GM12878 (cell line): ENCODE measurements at regions of chr3 and their contacts with region 1.

Region 1: GRCh38 chr3:171822431-171823106 is 12.3 kb upstream of the PLD1 start:
- DNase-seq: no peak
- ATAC-seq: peak; percentile 88
- H3K4me3 ChIP-seq: no peak overlapping the region
- H3K27ac ChIP-seq: no peak overlapping the region
- H3K4me1 ChIP-seq: no peaks in the 10 kb centered on the region
- H3K27me3 ChIP-seq: no peaks in the 10 kb centered on the region; a peak in 1 of 4 replicates
- CTCF ChIP-seq: no peak
- EP300 ChIP-seq: no peak
- POLR2A ChIP-seq: no peak
- RAD21 ChIP-seq: no peak

Region 2: DNA sequence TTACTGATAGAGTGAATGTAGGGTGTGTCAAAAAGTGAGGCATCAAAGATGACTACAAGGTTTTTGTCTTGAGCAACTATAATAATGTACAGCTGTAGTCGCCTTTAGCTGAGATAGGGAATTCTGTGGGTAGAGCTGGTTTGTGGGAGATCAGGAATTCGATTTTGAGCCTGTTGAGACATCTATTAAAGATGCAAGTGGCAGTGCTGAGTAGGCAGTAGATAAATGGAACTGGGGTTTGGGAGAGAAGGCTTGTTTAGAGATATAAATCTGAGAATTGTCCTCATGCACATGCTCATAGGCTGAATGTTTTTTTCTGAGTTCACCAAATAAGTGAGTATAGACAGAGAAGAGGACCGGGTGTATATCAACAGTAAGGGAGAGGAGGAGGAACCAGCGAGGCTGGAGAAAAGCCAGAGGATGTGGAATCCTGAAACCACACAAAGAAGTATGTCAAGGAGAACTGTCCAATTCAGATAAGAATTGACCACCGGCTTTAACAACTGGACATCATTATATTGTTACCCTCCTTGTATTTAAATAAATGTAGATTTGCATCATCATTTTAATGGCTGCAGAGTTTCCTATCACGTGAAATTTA is 216.3 kb before region 1 on chr3:
- CTCF ChIA-PET with region 1: no interaction called
- POLR2A ChIA-PET with region 1: no interaction called
- RAD21 ChIA-PET with region 1: no interaction called
- SMC1A ChIA-PET with region 1: no interaction called
- in situ Hi-C with region 1: no loop called
- intact Hi-C with region 1: no loop called
- DNase-seq: no peak
- ATAC-seq: no peak
- H3K4me3 ChIP-seq: no peak overlapping the region
- H3K27ac ChIP-seq: no peak overlapping the region
- H3K4me1 ChIP-seq: no peaks in the 10 kb centered on the region
- H3K27me3 ChIP-seq: no peaks in the 10 kb centered on the region; a peak in 1 of 4 replicates
- CTCF ChIP-seq: no peak
- EP300 ChIP-seq: no peak
- POLR2A ChIP-seq: no peak
- RAD21 ChIP-seq: no peak

Region 3: GRCh38 chr3:171809821-171810628 is 12.5 kb before region 1 on chr3 and contains the start of gene PLD1:
- CTCF ChIA-PET with region 1: interaction called, 110 read pairs
- POLR2A ChIA-PET with region 1: interaction called, 23 read pairs
- RAD21 ChIA-PET with region 1: interaction called, 117 read pairs
- SMC1A ChIA-PET with region 1: interaction called, 151 read pairs
- in situ Hi-C with region 1: no loop called
- intact Hi-C with region 1: no loop called
- DNase-seq: no peak
- ATAC-seq: peak; percentile 72
- H3K4me3 ChIP-seq: peak within 1 kb of the TSS; percentile 69
- H3K27ac ChIP-seq: peak within 1 kb of the TSS; percentile 45
- H3K4me1 ChIP-seq: no peaks in the 10 kb centered on the region
- H3K27me3 ChIP-seq: no peaks in the 10 kb centered on the region
- CTCF ChIP-seq: 0 out of 6 replicates have a peak, but pooled peaks of 1 of the 3 experiments have one; percentile 5
- EP300 ChIP-seq: peak; percentile 6 to 12; a peak in 2 of 4 replicates
- POLR2A ChIP-seq: no peak
- RAD21 ChIP-seq: no peak
- polyA plus RNA-seq, gene PLD1: 3.1 to 3.4 TPM

Region 4: DNA sequence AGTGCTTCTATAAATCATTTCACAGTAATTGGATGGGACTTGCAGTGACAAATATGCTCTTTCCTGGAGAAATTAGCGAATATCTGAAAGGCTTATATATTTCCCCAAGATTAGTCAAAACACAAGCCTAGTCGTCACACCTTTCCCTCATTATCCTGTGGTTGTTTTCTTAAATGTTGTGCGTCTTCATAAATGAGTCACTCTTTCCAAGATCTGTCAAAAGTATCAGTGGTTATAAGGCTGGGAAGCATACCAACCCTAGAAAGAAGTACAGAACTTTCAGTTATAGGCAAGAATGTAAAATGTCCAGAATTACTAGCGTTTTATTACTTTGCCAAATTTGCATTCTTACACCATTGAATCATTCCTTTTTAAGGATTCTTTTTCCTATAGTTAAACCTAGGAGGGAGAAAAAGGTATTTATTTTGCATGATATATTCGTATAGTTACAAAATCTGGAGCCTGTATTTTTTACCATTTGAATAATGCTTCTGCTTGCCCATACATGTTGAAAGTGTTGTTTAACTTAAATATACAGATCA is 54.2 kb after region 1 on chr3:
- CTCF ChIA-PET with region 1: no interaction called
- POLR2A ChIA-PET with region 1: no interaction called
- RAD21 ChIA-PET with region 1: no interaction called
- SMC1A ChIA-PET with region 1: no interaction called
- in situ Hi-C with region 1: no loop called
- intact Hi-C with region 1: no loop called
- DNase-seq: no peak
- ATAC-seq: peak; percentile 47
- H3K4me3 ChIP-seq: no peak overlapping the region
- H3K27ac ChIP-seq: no peak overlapping the region
- H3K4me1 ChIP-seq: no peaks in the 10 kb centered on the region
- H3K27me3 ChIP-seq: peaks cover 0 to 5% of the 10 kb centered on the region in 2 experiments; a peak in 1 of 4 replicates
- CTCF ChIP-seq: no peak
- EP300 ChIP-seq: no peak
- POLR2A ChIP-seq: no peak
- RAD21 ChIP-seq: no peak